Mammary epithelial cell (primary cell): ENCODE measurements at regions of chr2 and their contacts with region 1.

Region 1: GRCh38 chr2:241009601-241010530 is 11.4 kb downstream of the SNED1 start:
- DNase-seq: peak; percentile 35
- H3K4me3 ChIP-seq: peak overlapping the region in 2 of 3 experiments; percentile 3 to 10
- H3K27ac ChIP-seq: no peak overlapping the region
- H3K4me1 ChIP-seq: peaks cover 17% of the 10 kb centered on the region
- H3K27me3 ChIP-seq: no peaks in the 10 kb centered on the region
- CTCF ChIP-seq: peak in 1 of 2 donors; percentile 11

Region 2: DNA sequence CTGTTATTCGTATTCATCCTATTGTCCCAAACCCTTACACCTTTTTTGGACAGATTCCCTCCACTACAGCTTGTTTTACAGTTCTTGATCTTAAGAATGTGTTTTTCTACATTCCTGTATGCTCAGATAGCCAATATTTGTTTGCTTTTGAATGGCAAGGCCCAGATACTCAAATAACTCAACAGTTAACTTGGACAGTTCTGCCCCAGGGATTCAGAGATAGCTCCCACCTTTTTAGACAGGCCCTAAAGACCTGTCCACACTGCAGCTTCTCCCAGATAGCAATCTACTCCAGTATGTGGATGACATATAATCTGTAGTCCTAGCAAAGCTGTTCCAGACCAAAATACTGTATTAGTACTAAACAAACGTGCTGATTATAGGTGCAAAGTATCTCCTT is 148.3 kb before region 1 on chr2:
- CTCF ChIA-PET with region 1: no interaction called
- dilution Hi-C with region 1: no loop called
- in situ Hi-C with region 1: no loop called
- intact Hi-C with region 1: no loop called
- DNase-seq: no peak
- H3K4me3 ChIP-seq: no peak overlapping the region
- H3K27ac ChIP-seq: no peak overlapping the region
- H3K4me1 ChIP-seq: no peaks in the 10 kb centered on the region
- H3K27me3 ChIP-seq: peaks cover 6% of the 10 kb centered on the region
- CTCF ChIP-seq: no peak

Region 3: DNA sequence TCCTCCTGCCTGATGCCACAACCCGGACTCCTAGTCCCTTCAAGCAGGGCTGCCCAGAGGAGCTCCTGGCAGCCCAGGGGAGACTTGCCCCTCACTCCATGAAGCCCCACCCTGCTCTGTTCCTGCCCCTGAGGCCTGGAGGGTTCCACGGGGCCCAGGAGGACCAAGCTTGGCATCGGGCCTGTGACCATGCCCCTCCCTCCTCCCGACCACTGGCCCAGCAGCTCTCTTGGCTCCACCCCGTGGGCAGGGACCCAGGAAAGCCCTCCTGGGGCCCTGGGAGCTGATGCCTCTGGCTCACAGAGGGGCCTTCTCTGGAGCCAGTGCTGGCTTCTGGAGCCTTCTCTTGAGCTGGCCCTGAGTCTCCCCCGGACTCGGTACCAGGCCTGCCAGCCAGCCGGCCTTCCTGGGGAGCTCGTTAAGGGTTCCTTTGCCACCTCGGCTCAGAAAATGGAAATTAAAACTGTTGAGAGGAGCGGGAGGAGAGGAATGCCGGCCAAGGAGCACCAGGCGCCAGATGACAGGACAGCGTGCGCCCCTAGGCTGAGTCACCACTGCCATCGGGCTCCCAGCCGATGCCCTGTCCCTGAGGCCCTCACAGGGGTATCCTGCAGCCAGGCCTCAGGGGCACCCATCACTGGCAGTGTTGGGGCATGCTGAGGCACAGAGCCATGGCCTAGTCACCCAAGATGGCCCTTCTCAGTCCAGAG is 52.1 kb before region 1 on chr2:
- CTCF ChIA-PET with region 1: no interaction called
- dilution Hi-C with region 1: loop called (anchors 5 kb)
- in situ Hi-C with region 1: no loop called
- intact Hi-C with region 1: no loop called
- DNase-seq: no peak
- H3K4me3 ChIP-seq: no peak overlapping the region
- H3K27ac ChIP-seq: no peak overlapping the region
- H3K4me1 ChIP-seq: no peaks in the 10 kb centered on the region
- H3K27me3 ChIP-seq: peaks cover 23% of the 10 kb centered on the region
- CTCF ChIP-seq: no peak

Region 4: DNA sequence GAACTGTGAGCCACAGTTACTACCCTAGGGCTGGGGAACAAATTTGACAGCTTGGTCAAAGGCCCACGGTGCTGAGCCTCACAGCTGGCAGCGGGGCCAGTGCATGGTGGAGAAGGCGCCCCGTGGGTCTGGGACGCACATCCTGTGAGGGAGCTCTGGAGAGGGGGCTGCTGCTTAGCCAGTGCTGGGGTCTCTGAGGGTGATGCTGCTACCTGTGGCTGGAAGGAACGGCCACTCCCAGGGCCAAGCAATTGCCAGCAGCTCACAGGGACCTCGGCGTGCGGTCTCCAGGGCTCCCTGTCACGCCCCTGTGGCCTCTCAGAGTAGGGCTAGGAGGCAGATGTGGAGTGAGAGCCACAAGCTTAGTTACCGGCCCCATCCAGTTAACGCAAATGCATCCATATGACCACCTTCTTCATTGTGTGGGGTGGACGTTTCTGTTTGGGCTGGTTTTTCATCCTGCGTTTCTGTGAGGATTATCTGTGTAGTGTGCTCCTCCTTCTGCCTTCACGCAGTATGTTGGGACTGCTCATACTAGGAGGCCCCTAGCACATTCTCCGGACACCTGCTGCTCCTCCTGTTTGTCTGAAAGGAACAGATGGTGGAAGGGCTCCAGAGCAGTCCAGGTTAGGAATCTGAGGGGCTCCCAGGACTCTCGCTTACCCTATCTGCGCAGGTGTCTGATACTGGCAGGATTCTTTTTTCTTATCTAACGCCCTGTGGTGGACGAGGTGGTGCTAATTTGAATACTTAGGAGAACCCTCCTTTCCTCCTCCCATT is 472.5 kb after region 1 on chr2:
- CTCF ChIA-PET with region 1: no interaction called
- dilution Hi-C with region 1: no loop called
- in situ Hi-C with region 1: no loop called
- intact Hi-C with region 1: no loop called
- DNase-seq: no peak
- H3K4me3 ChIP-seq: no peak overlapping the region
- H3K27ac ChIP-seq: no peak overlapping the region
- H3K4me1 ChIP-seq: no peaks in the 10 kb centered on the region
- H3K27me3 ChIP-seq: no peaks in the 10 kb centered on the region
- CTCF ChIP-seq: no peak